Calu3 (cell line): ENCODE measurements at regions of chr6 and their contacts with region 1.

Region 1: DNA sequence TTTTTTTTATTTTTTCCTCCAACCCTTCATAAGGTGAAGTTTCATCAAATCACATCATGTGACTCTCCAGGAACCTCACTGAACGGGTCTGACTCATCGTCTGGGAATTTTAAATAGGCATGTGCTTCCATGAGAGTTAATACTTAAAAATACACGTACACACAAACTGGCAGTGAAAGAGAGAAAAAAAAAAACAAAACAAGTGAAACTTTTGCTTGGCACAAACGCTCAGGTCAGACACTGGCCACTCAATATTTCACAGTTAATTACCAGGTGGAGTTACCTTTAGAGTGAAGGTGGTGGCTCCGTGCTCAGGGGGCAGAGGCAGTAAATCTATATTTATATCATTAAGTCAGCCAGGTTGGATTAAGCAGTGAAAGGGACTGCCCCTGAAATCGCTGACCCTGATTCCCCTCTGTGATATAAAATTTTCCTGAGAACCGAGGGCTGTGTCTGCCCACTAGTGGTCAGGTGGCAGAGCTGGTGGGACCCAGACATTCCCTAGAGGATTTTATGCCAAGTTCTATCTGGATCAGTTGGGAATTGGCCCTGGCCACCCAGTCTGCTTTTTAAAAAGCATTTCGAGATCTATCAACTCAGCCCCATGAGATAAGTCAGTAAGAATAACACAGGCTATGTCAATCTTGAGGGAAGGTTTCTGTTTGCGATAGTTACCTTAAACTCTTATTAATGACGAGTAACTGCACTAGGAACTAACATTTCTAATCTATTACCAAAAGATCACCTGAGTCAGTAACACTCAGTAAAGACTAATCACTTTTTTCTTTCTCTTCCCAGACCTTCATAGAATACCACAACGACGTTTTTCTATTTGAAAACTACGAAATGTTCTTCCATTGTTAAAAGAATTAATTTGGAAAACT is 259.1 kb downstream of the HDGFL1 start:
- DNase-seq: peak; percentile 88
- H3K4me3 Mint-ChIP-seq: peak overlapping the region; percentile 48
- H3K27ac Mint-ChIP-seq: peak overlapping the region; percentile 82
- H3K4me1 Mint-ChIP-seq: peaks cover 68% of the 10 kb centered on the region
- H3K27me3 Mint-ChIP-seq: no peaks in the 10 kb centered on the region
- CTCF ChIP-seq: peak; percentile 95

Region 2: DNA sequence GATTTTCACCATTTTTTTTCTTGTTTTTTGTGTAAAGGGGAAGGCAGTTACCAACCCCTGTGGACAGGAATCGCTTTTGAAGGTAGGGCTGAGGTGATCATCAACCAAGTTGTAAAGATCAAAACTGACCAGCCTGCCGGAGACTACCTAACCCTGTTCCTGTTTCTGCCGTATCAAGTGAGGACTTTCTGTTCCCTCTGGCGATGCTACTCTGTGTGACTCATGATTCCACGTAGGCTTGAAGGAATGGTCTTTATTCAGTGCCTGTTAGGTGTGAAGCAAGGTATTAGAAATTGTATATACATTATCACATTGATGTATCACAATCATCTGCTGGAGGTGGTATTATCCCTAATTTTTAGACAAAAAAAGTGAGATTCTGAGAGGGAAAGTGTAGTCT is 1073.5 kb before region 1 on chr6:
- CTCF ChIA-PET with region 1: no interaction called
- intact Hi-C with region 1: loop called (anchors 5 kb)
- DNase-seq: peak; percentile 72
- H3K4me3 Mint-ChIP-seq: no peak overlapping the region
- H3K27ac Mint-ChIP-seq: peak overlapping the region; percentile 55
- H3K4me1 Mint-ChIP-seq: peaks cover 68% of the 10 kb centered on the region
- H3K27me3 Mint-ChIP-seq: no peaks in the 10 kb centered on the region
- CTCF ChIP-seq: no peak

Region 3: GRCh38 chr6:21953831-21954801 is 874.3 kb before region 1 on chr6:
- CTCF ChIA-PET with region 1: no interaction called
- intact Hi-C with region 1: loop called (anchors 1 kb)
- DNase-seq: peak; percentile 34
- H3K4me3 Mint-ChIP-seq: no peak overlapping the region
- H3K27ac Mint-ChIP-seq: peak overlapping the region; percentile 40
- H3K4me1 Mint-ChIP-seq: peaks cover 44% of the 10 kb centered on the region
- H3K27me3 Mint-ChIP-seq: no peaks in the 10 kb centered on the region
- CTCF ChIP-seq: no peak

Region 4: GRCh38 chr6:22221630-22222029 is 606.8 kb before region 1 on chr6:
- CTCF ChIA-PET with region 1: no interaction called
- intact Hi-C with region 1: loop called (anchors 2 kb)
- DNase-seq: peak; percentile 79
- H3K4me3 Mint-ChIP-seq: peak overlapping the region; percentile 34
- H3K27ac Mint-ChIP-seq: peak overlapping the region; percentile 53
- H3K4me1 Mint-ChIP-seq: peaks cover 13% of the 10 kb centered on the region
- H3K27me3 Mint-ChIP-seq: no peaks in the 10 kb centered on the region
- CTCF ChIP-seq: no peak

Region 5: GRCh38 chr6:22471132-22471690 is 357.2 kb before region 1 on chr6:
- CTCF ChIA-PET with region 1: no interaction called
- intact Hi-C with region 1: loop called (anchors 5 kb)
- DNase-seq: peak; percentile 70
- H3K4me3 Mint-ChIP-seq: no peak overlapping the region
- H3K27ac Mint-ChIP-seq: no peak overlapping the region
- H3K4me1 Mint-ChIP-seq: peaks cover 38% of the 10 kb centered on the region
- H3K27me3 Mint-ChIP-seq: no peaks in the 10 kb centered on the region
- CTCF ChIP-seq: no peak

Region 6: DNA sequence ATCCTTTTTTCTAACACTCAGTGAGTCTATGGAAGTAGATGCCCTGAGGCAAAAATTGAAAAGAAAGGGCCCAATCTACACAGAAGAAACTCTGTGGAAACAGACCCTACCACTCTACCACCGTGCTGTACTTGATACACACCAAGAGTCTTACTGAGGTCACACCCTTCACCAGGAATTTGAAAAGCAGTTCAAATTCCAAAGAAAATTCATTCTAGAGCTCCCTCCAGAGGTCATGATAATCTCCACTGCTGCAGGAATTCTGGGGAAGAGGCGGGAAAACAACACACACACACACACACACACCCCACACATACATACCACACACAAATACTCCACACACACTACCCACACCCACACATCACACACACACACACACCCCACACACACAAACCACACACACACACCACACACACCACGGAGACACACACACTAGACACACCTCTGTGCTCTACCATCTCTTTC is 77.7 kb after region 1 on chr6:
- CTCF ChIA-PET with region 1: interaction called, 3 read pairs
- intact Hi-C with region 1: loop called (anchors 1 kb)
- DNase-seq: peak; percentile 34
- H3K4me3 Mint-ChIP-seq: no peak overlapping the region
- H3K27ac Mint-ChIP-seq: no peak overlapping the region
- H3K4me1 Mint-ChIP-seq: peaks cover 31% of the 10 kb centered on the region
- H3K27me3 Mint-ChIP-seq: no peaks in the 10 kb centered on the region
- CTCF ChIP-seq: peak; percentile 30

Region 7: DNA sequence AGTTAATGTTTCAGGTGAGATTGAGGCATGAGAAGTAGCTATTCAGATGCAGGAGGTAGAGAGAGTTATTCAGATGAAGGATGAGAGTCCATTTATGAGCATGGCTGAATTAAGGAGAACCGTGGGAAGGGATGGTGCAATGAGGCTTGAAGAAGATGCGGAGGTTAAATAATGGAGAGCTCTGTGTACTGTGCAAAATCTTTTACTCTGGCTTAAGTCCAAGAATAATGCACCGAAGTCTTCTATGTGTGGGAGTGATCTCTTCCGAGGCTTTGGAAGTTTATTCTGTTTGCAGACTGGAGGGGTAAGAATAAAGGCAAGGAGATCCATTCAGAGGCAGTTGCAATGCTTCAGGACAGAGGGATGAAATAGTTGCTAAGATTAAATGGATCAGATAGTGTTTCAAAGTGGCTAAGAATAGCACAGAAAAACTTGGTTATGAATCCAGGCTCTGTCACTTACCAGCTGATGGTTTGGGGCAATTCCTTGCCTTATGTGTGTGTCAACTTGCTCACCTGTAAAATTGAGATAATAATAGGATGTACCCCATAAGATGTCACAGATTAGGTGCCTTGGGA is 208.1 kb after region 1 on chr6:
- CTCF ChIA-PET with region 1: no interaction called
- intact Hi-C with region 1: no loop called
- DNase-seq: no peak
- H3K4me3 Mint-ChIP-seq: no peak overlapping the region
- H3K27ac Mint-ChIP-seq: no peak overlapping the region
- H3K4me1 Mint-ChIP-seq: no peaks in the 10 kb centered on the region
- H3K27me3 Mint-ChIP-seq: no peaks in the 10 kb centered on the region
- CTCF ChIP-seq: no peak